HCT116 (cell line): ENCODE measurements at regions of chr16 and their contacts with region 1.

Region 1: GRCh38 chr16:18932243-18932981 is 6.2 kb upstream of the SMG1 start:
- DNase-seq: no peak
- ATAC-seq: no peak
- H3K4me3 ChIP-seq: no peak overlapping the region
- H3K27ac ChIP-seq: no peak overlapping the region
- H3K4me1 ChIP-seq: no peaks in the 10 kb centered on the region
- H3K27me3 ChIP-seq: no peaks in the 10 kb centered on the region
- CTCF ChIP-seq: no peak
- POLR2A ChIP-seq: no peak
- RAD21 ChIP-seq: no peak

Region 2: DNA sequence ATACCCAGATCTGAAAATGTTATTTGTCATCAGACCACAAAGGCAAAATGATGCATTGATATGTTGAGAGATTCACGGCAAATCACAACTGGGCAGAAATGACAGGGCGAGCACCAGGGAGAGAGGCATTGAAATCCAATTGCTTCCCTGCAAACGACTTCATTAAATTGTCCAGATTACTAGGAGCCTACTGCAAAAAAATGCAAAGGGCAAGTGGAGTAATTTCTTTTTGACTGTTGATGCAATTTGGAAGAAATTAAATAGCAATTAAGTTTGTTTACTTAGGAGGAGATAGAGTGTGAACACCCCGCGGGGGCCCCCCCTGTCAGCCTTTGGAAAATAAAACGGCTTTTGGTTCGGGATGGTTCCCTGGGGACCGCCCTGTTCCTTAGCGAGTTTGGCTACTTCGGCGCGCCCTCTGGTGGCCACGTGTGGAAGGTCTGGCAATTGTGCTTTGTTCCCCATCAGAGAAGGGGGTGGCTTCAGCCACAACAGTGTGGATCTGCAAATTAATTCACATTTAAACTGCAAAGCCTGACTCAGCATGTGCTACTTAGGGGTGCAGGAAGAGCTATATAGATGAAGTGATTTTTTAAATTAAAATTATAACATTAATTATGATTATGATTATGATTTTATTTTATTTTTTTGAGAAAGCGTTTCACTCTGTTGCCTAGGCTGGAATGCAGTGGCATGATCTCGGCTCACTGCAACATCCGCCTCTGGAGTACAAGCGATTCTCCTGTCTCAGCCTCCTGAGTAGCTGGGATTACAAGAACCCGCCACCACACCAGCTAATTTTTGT is 36.8 kb after region 1 on chr16:
- CTCF ChIA-PET with region 1: no interaction called
- POLR2A ChIA-PET with region 1: no interaction called
- RAD21 ChIA-PET with region 1: no interaction called
- intact Hi-C with region 1: loop called (anchors 2 kb)
- DNase-seq: peak; percentile 58
- ATAC-seq: peak; percentile 97
- H3K4me3 ChIP-seq: peak overlapping the region; percentile 26 to 49
- H3K27ac ChIP-seq: no peak overlapping the region
- H3K4me1 ChIP-seq: peaks cover 0 to 7% of the 10 kb centered on the region in 2 experiments; a peak in 3 of 4 replicates
- H3K27me3 ChIP-seq: no peaks in the 10 kb centered on the region
- CTCF ChIP-seq: peak; percentile 83 to 93 (median 89)
- POLR2A ChIP-seq: no peak
- RAD21 ChIP-seq: peak; percentile 90

Region 3: DNA sequence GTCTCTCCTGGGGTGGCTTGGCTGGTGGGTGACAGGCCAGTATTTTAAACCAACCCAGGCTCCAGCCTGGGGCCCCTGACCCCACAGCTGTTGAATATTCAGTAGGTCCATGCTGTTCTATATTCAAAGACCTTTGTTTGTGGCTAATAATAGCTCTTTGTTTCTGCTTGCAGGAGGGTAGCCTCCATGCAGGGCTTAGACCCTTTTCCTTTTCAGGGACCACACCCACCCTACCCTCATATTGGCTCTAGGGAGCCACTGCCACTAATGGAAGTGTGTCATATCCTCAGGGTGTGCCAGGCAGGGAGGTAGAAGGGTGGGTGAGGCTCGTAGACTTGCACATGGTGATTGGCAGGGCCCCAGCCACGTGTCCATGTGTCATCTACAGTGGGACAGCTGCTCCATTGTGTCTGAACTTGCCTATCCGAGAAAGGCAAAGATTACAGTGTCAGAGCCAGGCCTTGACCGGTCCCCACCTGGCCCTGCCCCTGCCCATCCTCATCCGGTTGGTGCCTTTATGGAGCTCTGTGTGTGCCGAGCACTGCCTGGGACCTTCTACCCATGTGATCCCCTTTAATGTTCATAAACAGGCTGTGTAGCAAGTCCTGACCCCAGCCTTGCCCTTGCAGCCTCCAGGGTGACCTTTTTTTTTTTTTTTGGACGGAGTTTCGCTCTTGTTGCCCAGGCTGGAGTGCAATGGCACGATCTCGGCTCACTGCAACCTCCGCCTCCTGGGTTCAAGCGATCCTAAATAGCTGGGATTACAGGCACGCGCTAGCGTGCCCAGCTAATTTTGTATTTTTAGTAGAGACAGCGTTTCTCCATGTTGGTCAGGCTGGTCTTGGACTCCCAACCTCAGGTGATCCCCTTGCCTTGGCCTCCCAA is 73.4 kb after region 1 on chr16:
- CTCF ChIA-PET with region 1: no interaction called
- POLR2A ChIA-PET with region 1: no interaction called
- RAD21 ChIA-PET with region 1: no interaction called
- intact Hi-C with region 1: no loop called
- DNase-seq: peak; percentile 78
- ATAC-seq: peak; percentile 92
- H3K4me3 ChIP-seq: no peak overlapping the region
- H3K27ac ChIP-seq: no peak overlapping the region
- H3K4me1 ChIP-seq: peaks cover 6 to 26% of the 10 kb centered on the region in 2 experiments
- H3K27me3 ChIP-seq: no peaks in the 10 kb centered on the region
- CTCF ChIP-seq: no peak
- POLR2A ChIP-seq: no peak
- RAD21 ChIP-seq: no peak

Region 4: GRCh38 chr16:19245326-19245925 is 313.0 kb after region 1 on chr16:
- CTCF ChIA-PET with region 1: no interaction called
- POLR2A ChIA-PET with region 1: no interaction called
- RAD21 ChIA-PET with region 1: no interaction called
- intact Hi-C with region 1: no loop called
- DNase-seq: no peak
- ATAC-seq: no peak
- H3K4me3 ChIP-seq: no peak overlapping the region
- H3K27ac ChIP-seq: no peak overlapping the region
- H3K4me1 ChIP-seq: no peaks in the 10 kb centered on the region
- H3K27me3 ChIP-seq: no peaks in the 10 kb centered on the region
- CTCF ChIP-seq: no peak
- POLR2A ChIP-seq: no peak
- RAD21 ChIP-seq: no peak